Right cardiac atrium (tissue), 5 donors: ENCODE measurements at regions of chr11 and their contacts with region 1.

Region 1: GRCh38 chr11:25206762-25207161 is 709.9 kb downstream of the LUZP2 start:
- DNase-seq: no peak
- ATAC-seq: no peak
- H3K4me3 ChIP-seq: no peak overlapping the region
- H3K27ac ChIP-seq: no peak overlapping the region
- H3K4me1 ChIP-seq: no peaks in the 10 kb centered on the region
- H3K27me3 ChIP-seq: no peaks in the 10 kb centered on the region

Region 2: DNA sequence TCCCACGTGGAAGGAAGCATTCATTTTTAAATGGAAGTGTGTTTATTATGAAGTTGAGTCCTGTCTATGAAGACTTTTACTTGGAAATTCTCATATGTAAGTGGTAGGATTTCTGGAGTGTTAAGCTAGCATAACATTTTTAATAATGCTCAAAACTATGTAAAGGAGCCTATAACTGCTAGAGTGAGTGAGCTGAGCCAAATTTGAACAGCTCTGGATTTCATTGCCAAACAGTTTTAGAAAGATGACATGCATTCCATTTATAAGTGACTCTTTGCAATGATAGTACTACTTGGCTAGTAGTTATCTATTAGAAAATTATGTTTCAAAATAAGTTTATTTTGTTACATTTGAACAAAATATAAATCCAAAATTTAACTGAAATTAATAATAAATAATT is 11.3 kb after region 1 on chr11:
- intact Hi-C with region 1: loop called in 1 of 4 experiments (anchors 2 kb)
- DNase-seq: no peak
- ATAC-seq: no peak
- H3K4me3 ChIP-seq: no peak overlapping the region
- H3K27ac ChIP-seq: no peak overlapping the region
- H3K4me1 ChIP-seq: no peaks in the 10 kb centered on the region
- H3K27me3 ChIP-seq: no peaks in the 10 kb centered on the region

Region 3: DNA sequence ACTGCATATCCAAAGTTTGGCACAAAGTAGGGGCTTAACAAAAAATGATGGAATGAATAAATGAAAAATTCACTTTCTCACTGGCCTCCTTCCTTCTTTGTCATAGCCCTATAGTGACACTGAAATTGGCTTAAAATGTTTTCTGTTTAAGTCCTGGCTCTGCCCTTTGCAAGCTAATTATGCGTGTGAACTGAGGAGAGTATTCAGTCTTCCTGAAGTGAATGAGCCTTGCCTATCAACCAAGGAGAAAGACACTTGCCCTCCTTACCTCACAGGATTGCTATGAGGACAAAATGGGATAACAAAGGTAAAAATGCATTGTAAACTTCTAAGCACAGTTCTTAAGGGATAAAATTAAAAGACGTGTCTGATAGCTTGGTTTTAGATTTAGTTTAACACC is 395.4 kb after region 1 on chr11:
- intact Hi-C with region 1: no loop called
- DNase-seq: no peak
- ATAC-seq: no peak
- H3K4me3 ChIP-seq: no peak overlapping the region
- H3K27ac ChIP-seq: no peak overlapping the region
- H3K4me1 ChIP-seq: no peaks in the 10 kb centered on the region
- H3K27me3 ChIP-seq: no peaks in the 10 kb centered on the region